ENCODE measurements at regions of chr3 and their contacts with region 1.

Region 1: DNA sequence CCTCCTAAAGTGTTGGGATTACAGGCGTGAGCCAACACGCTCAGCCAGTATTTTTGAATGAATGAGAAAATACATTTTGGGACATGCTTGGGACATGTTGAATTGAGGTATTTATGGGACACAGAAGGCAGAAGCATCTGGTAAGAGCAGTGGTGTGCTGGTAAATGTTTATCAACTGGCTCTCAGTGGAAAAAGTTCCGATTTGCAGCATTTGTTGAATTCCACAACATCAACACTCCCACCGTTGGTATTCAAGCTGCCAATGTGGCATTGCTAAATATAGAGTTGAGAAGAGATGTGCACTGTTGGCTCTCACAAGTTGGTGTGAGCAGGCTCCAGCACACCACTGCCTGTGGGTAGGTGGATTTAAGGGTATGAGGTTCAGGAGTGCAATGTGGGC is 35.8 kb upstream of the LRRFIP2 start:
- DNase-seq: no peak
- ATAC-seq: no peak
- H3K4me3 ChIP-seq: no peak overlapping the region
- H3K27ac ChIP-seq: no peak overlapping the region
- H3K4me1 ChIP-seq: peaks cover 14% of the 10 kb centered on the region
- H3K27me3 ChIP-seq: no peaks in the 10 kb centered on the region
- CTCF ChIP-seq: no peak
- EP300 ChIP-seq: no peak
- POLR2A ChIP-seq: no peak
- RAD21 ChIP-seq: no peak

Region 2: DNA sequence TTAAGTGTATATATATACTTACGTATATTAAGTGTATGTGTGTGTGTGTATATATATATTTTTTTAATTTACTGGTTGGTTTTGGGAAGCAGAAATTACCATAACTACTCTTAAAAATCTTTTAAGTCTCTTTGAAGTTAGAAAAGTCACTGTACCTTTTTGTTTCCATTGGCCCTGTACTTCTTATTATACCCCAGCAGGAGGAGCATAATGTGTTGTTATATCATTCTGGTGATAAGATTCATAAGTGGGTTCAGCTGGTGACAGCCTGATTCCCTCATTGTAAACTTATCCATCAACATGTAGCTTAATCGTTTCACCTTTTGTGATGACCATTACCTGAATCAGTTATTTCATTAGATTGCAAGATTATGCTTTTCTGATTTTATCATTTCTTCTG is 186.1 kb before region 1 on chr3:
- CTCF ChIA-PET with region 1: interaction called, 5 read pairs
- POLR2A ChIA-PET with region 1: no interaction called
- in situ Hi-C with region 1: loop called (anchors 10 kb)
- intact Hi-C with region 1: loop called (anchors 1 kb)
- DNase-seq: no peak
- ATAC-seq: no peak
- H3K4me3 ChIP-seq: no peak overlapping the region
- H3K27ac ChIP-seq: no peak overlapping the region
- H3K4me1 ChIP-seq: no peaks in the 10 kb centered on the region
- H3K27me3 ChIP-seq: no peaks in the 10 kb centered on the region
- CTCF ChIP-seq: peak; percentile 19; the same call in 1 of the 2 replicates
- EP300 ChIP-seq: no peak
- POLR2A ChIP-seq: no peak
- RAD21 ChIP-seq: no peak

Region 3: GRCh38 chr3:37243820-37244748 is 33.9 kb after region 1 on chr3:
- CTCF ChIA-PET with region 1: no interaction called
- POLR2A ChIA-PET with region 1: no interaction called
- in situ Hi-C with region 1: no loop called
- intact Hi-C with region 1: loop called (anchors 2 kb)
- DNase-seq: peak; percentile 54
- ATAC-seq: peak; percentile 77
- H3K4me3 ChIP-seq: peak overlapping the region; percentile 79 to 91 (median 89)
- H3K27ac ChIP-seq: peak overlapping the region; percentile 98
- H3K4me1 ChIP-seq: peaks cover 52% of the 10 kb centered on the region
- H3K27me3 ChIP-seq: peaks cover 0 to 3% of the 10 kb centered on the region in 2 experiments; a peak in 1 of 5 replicates
- CTCF ChIP-seq: no peak
- EP300 ChIP-seq: no peak
- POLR2A ChIP-seq: peak; percentile 25 to 49; a peak in 2 of 4 replicates
- RAD21 ChIP-seq: no peak

Measured in HepG2 (cell line).